BJ (cell line): ENCODE measurements at regions of chr14 and their contacts with region 1.

Region 1: DNA sequence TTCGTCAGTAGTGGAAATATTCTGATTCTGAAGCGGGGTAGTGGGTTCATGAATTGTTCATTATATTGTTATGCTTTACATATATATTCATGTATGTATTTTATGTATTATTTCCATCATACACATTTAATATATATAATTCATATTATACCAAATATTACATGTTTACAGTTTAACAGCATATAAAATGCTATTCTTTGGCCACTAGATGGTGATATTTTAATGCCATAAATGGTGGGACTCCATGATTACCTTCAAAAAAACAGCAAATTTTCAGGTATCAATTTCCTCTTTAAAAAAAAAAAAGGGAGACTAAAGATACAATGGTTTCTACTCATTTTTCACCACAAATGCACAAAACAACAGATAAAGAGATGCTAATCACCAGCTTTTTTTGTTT is 41.0 kb downstream of the BDKRB1 start:
- DNase-seq: no peak
- H3K4me3 ChIP-seq: no peak overlapping the region
- H3K27me3 ChIP-seq: no peaks in the 10 kb centered on the region
- CTCF ChIP-seq: peak; percentile 46

Region 2: GRCh38 chr14:96309896-96310330 is 12.9 kb after region 1 on chr14:
- CTCF ChIA-PET with region 1: interaction called, 33 read pairs
- POLR2A ChIA-PET with region 1: no interaction called
- DNase-seq: no peak
- H3K4me3 ChIP-seq: no peak overlapping the region
- H3K27me3 ChIP-seq: no peaks in the 10 kb centered on the region
- CTCF ChIP-seq: no peak

Region 3: DNA sequence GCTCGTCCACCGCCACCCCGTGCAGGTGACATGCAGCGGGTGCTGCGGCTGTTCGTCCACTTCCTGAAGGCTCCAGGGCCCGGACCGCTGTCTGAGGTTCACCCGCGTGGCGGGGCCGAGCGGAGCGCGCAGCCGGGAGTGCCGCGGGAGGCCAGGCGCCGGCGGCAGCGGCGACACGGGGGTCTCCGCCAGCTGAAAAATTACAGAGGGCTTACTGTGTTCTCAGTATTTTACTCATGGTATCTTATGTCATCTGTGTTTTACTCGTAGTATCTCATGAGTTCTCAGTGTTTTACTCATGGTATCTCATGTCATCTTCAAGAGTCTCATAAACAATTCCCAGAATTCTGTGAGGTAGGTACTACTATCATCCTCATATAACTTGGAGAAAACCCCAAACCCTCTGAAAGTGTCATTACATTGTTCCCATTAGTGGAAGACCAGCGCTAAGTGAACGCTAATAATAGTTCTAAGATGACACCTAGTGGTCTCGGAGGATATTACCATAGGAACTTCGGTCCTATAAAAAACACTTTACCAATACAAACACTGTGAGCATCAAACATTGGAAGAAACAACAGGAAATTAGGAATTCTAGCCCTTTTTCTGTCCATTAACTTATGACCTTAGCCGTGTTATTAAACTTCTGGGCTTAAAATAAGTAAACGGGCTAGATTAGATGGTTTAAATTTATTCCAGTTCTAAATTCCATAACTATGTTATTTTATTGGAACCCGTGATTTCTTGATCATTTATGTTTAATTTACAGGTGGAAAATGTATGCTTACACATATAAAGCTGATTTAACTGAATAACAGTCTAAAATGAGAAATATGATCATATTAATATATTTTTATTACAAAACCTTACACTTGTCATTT is 127.3 kb after region 1 on chr14:
- CTCF ChIA-PET with region 1: interaction called, 22 read pairs
- POLR2A ChIA-PET with region 1: no interaction called
- DNase-seq: peak; percentile 13
- H3K4me3 ChIP-seq: peak overlapping the region; percentile 37
- H3K27me3 ChIP-seq: no peaks in the 10 kb centered on the region
- CTCF ChIP-seq: peak; percentile 62

Region 4: DNA sequence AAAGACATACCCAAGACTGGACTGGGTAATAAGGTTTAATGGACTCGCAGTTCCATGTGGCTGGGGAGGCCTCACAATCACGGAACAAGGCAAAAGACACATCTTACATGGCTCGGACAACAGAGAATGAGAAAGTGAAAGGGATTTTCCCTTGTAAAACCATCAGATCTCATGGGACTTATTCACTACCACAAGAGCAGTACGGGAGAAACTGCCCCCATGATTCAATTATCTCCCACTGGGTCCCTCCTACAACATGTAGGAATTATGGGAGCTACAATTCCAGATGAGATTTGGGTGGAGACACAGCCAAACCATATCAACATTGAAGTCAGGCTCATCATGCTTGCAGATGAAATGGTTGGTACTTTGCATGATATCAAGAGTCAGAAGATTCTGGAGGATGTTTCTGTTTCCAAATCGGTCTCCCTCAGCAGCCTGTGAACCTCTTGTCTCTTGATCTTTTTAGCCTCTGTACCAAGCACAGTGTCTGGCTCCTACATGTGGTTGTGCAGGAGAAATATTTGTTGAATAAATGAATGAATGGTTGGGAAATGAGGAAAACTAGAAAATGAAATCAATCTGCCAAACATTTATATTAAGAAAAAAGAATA is 598.8 kb after region 1 on chr14:
- CTCF ChIA-PET with region 1: no interaction called
- POLR2A ChIA-PET with region 1: no interaction called
- DNase-seq: no peak
- H3K4me3 ChIP-seq: no peak overlapping the region
- H3K27me3 ChIP-seq: no peaks in the 10 kb centered on the region
- CTCF ChIP-seq: no peak